CD8-positive, alpha-beta T cell (primary cell): ENCODE measurements at regions of chr17 and their contacts with region 1.

Region 1: DNA sequence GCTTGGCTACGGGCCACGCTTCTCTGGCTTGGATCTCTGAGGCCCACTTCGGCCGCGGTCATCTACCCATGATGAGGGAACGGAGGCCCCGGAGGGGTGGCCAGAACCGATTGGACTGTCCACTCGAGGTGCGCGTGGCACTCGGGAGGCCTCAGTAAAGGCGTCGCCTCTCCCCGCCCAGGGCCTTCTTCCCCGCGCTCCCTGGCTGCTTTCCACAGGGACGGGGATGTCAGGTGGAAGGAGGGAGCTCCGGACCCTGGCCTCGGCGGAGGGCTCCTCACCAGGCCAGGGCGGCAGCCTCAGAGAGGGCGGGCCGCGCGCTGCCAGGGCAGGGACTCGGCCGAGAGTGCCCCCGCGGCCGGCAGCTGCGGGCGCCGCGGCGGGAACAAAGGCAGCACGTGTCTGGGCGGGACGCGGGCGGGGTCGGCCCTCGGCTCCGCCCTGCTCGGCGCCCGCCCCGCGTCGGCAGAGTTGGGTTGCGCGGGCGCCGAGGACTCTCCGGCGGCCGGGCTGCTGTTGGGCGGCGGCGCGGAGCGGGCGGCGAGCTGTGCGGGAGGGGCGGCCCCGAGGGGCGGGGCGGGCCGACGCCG is 587 bp upstream of the CDK5R1 start:
- DNase-seq: peak in 8 of 9 experiments; percentile 45 to 89 (median 66)
- ATAC-seq: peak; percentile 78
- H3K4me3 ChIP-seq: no peak overlapping the region
- H3K4me3 Mint-ChIP-seq: peak overlapping the region; percentile 76
- H3K27ac ChIP-seq: no peak overlapping the region
- H3K27ac Mint-ChIP-seq: peak overlapping the region; percentile 39
- H3K4me1 ChIP-seq: peaks cover 44% of the 10 kb centered on the region
- H3K4me1 Mint-ChIP-seq: peaks cover 41% of the 10 kb centered on the region
- H3K27me3 ChIP-seq: no peaks in the 10 kb centered on the region
- H3K27me3 Mint-ChIP-seq: no peaks in the 10 kb centered on the region
- CTCF ChIP-seq: no peak

Region 2: GRCh38 chr17:32444308-32445073 is 41.7 kb before region 1 on chr17 and contains the start of gene PSMD11:
- CTCF ChIA-PET with region 1: interaction called, 5 read pairs
- POLR2A ChIA-PET with region 1: interaction called, 12 read pairs
- intact Hi-C with region 1: loop called (anchors 1 kb)
- DNase-seq: peak; percentile 97 to 99 (median 99)
- ATAC-seq: peak; percentile 97
- H3K4me3 ChIP-seq: peak within 1 kb of the TSS; percentile 71 to 97
- H3K4me3 Mint-ChIP-seq: peak within 1 kb of the TSS; percentile 85
- H3K27ac ChIP-seq: peak within 1 kb of the TSS; percentile 71 to 72
- H3K27ac Mint-ChIP-seq: peak within 1 kb of the TSS; percentile 86
- H3K4me1 ChIP-seq: peaks cover 31% of the 10 kb centered on the region
- H3K4me1 Mint-ChIP-seq: peaks cover 36% of the 10 kb centered on the region
- H3K27me3 ChIP-seq: no peaks in the 10 kb centered on the region
- H3K27me3 Mint-ChIP-seq: no peaks in the 10 kb centered on the region
- CTCF ChIP-seq: peak; percentile 95
- total RNA-seq, gene PSMD11: 69.9 to 72.6 TPM

Region 3: DNA sequence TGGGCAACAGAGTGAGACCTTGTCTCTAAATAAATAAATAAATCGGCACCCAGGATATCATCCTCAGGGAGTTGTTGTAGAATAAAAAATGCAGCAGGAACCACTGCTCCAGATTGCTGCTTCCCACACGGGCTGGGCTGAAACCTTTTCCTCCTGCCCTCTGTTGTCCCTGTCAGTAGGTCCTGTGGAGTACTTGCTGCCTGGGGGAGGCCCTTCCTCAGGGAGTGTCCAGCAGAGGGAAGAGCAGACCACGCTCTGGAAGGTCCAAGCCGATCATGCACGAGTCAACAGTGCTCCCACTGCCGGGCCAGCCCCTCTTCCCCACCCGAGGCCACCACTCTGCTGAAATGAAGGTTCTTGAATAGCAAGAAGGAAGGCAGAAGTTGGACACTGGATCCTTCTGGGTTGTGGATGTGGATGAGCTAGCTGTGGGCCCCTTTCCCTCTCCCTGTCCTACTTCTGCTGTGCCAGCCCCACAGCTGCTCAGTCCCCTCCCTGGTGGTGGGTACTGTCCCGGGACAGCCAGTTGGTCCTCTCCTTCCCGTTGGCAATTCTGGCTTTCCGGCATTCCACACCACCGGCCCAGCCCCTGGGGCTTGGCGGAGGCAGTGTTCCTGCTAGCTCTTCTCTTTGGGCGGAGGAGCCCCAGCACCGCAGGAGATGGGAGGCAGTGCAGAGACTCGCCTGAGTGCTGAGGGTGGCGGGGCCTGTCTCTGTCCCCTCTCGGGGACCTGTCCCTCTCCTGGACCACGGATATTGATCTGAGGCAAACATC is 11.4 kb after region 1 on chr17:
- CTCF ChIA-PET with region 1: interaction called, 15 read pairs
- POLR2A ChIA-PET with region 1: interaction called, 6 read pairs
- intact Hi-C with region 1: loop called in 1 of 2 experiments (anchors 2 kb)
- DNase-seq: no peak
- ATAC-seq: no peak
- H3K4me3 ChIP-seq: no peak overlapping the region
- H3K4me3 Mint-ChIP-seq: no peak overlapping the region
- H3K27ac ChIP-seq: no peak overlapping the region
- H3K27ac Mint-ChIP-seq: no peak overlapping the region
- H3K4me1 ChIP-seq: peaks cover 54% of the 10 kb centered on the region
- H3K4me1 Mint-ChIP-seq: peaks cover 47% of the 10 kb centered on the region
- H3K27me3 ChIP-seq: no peaks in the 10 kb centered on the region
- H3K27me3 Mint-ChIP-seq: no peaks in the 10 kb centered on the region
- CTCF ChIP-seq: no peak

Region 4: DNA sequence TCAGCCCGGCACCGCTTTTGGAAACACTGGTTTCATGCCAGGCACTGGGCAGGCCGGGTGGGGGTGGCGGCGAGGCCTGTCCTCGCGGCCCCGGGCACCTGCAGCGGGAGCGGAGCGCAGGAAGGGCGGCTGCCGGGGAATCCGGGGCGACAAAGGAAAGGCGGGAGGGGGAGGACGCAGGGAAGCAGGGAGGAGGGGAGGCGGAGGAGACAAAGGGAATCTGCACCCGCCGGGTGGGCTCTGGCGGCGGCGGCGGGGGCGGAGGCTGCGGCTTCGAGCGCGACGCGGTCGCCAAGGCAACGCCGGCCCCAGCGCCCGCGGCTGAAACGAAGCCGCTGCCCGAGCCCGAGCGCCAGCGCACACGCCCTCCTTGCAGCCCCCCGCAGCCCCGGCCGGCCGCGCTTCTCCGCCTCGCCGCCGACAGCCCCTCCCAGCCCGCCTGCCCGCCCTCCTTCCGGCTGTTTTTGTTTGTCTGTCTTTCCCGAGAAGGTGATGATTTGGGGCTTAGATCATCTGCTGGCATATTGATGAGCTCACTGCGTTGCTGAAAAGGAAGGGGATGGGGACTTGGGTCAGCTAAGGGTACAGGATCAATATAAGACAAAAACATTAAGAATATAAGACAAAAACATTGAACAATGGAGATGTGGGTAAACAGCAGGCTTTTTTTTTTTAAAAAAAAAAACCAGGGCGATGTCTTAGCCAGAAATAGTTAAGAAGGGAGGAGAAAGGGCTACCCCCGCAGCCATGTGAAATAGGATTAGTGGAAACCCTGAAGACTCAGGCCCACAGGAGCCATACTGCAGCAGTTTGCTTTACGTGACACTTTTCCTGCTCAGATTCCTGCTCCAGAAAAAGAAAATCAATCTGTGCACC is 33.3 kb after region 1 on chr17:
- CTCF ChIA-PET with region 1: interaction called, 16 read pairs
- POLR2A ChIA-PET with region 1: interaction called, 13 read pairs
- intact Hi-C with region 1: loop called (anchors 1 kb)
- DNase-seq: peak; percentile 57 to 89 (median 76)
- ATAC-seq: peak; percentile 43
- H3K4me3 ChIP-seq: peak overlapping the region; percentile 31 to 51
- H3K4me3 Mint-ChIP-seq: peak overlapping the region; percentile 83
- H3K27ac ChIP-seq: peak overlapping the region; percentile 60 to 95
- H3K27ac Mint-ChIP-seq: peak overlapping the region; percentile 93
- H3K4me1 ChIP-seq: peaks cover 79% of the 10 kb centered on the region
- H3K4me1 Mint-ChIP-seq: peaks cover 81% of the 10 kb centered on the region
- H3K27me3 ChIP-seq: no peaks in the 10 kb centered on the region
- H3K27me3 Mint-ChIP-seq: no peaks in the 10 kb centered on the region
- CTCF ChIP-seq: no peak

Region 5: GRCh38 chr17:32609085-32609484 is 122.9 kb after region 1 on chr17:
- CTCF ChIA-PET with region 1: interaction called, 106 read pairs
- POLR2A ChIA-PET with region 1: interaction called, 4 read pairs
- intact Hi-C with region 1: loop called (anchors 1 kb)
- DNase-seq: peak; percentile 49 to 86 (median 74)
- ATAC-seq: peak; percentile 100
- H3K4me3 ChIP-seq: no peak overlapping the region
- H3K4me3 Mint-ChIP-seq: no peak overlapping the region
- H3K27ac ChIP-seq: no peak overlapping the region
- H3K27ac Mint-ChIP-seq: no peak overlapping the region
- H3K4me1 ChIP-seq: peaks cover 8% of the 10 kb centered on the region
- H3K4me1 Mint-ChIP-seq: peaks cover 6% of the 10 kb centered on the region
- H3K27me3 ChIP-seq: no peaks in the 10 kb centered on the region
- H3K27me3 Mint-ChIP-seq: no peaks in the 10 kb centered on the region
- CTCF ChIP-seq: peak; percentile 64

Region 6: DNA sequence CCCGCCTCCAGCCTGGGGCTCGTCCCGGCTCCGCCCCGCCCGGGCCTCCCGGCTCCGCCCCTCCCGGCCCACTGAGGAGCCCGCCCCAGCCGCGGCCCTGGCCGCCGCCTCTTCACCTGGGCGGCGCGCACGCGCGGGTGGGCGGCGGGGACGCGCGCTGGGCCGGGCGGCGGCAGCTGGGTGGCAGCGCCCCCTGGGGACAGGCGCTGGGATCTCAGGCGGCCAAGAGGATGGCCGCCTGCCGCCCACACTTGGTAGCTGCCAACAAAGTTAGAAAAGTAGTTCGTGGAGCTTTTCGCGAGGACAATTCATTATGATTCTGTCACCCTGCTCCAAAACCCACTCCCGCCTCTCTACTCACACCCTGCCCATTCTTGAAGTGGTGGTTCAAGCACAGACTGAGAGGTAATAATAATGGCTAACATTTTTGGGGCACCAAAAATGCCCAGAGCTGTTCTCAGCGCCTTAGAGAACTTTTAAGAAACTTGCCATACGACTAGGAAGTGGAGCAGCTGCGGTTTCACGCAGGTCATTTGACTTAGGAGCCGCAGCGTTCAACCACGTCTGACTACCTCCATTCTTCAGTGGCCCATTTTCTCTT is 391.1 kb after region 1 on chr17:
- CTCF ChIA-PET with region 1: interaction called, 3 read pairs
- POLR2A ChIA-PET with region 1: interaction called, 3 read pairs
- intact Hi-C with region 1: loop called in 1 of 2 experiments (anchors 1 kb)
- DNase-seq: peak; percentile 85 to 97 (median 92)
- ATAC-seq: peak; percentile 94
- H3K4me3 ChIP-seq: peak overlapping the region; percentile 43 to 76
- H3K4me3 Mint-ChIP-seq: peak overlapping the region; percentile 80
- H3K27ac ChIP-seq: peak overlapping the region; percentile 8 to 66
- H3K27ac Mint-ChIP-seq: peak overlapping the region; percentile 88
- H3K4me1 ChIP-seq: peaks cover 6% of the 10 kb centered on the region
- H3K4me1 Mint-ChIP-seq: peaks cover 13% of the 10 kb centered on the region
- H3K27me3 ChIP-seq: peaks cover 0 to 3% of the 10 kb centered on the region in 2 experiments
- H3K27me3 Mint-ChIP-seq: peaks cover 7% of the 10 kb centered on the region
- CTCF ChIP-seq: peak; percentile 74